Tibial artery (tissue), 4 donors: ENCODE measurements at regions of chr12 and their contacts with region 1.

Region 1: GRCh38 chr12:121536899-121537813 is 43.7 kb downstream of the KDM2B start:
- DNase-seq: peak; percentile 85 to 94
- H3K4me3 ChIP-seq: peak overlapping the region; percentile 62 to 88
- H3K27ac ChIP-seq: peak overlapping the region; percentile 75 to 81
- H3K4me1 ChIP-seq: peaks cover 0 to 28% (median 19%) of the 10 kb centered on the region in 4 donors
- H3K27me3 ChIP-seq: no peaks in the 10 kb centered on the region
- CTCF ChIP-seq: no peak

Region 2: DNA sequence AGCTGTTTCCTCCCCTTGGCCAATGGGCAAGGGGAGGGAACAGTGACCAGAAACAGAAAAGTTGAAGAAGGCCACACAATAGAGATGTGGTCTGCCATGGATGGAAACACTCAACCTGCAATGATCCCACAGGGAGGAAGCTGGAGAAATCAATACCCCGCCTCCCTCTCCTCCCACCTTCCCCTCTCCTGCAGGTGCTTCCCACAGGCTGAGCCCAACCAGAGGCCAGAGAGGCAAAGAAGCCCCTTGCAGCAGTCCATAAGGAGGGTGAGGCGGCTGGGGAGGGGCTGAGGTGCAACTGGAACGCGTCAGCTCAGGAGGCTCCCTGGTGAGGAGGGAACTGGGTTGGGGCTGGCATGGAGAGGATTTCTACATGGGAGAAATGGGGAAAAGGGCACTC is 53.2 kb before region 1 on chr12:
- intact Hi-C with region 1: no loop called
- DNase-seq: no peak
- H3K4me3 ChIP-seq: no peak overlapping the region
- H3K27ac ChIP-seq: no peak overlapping the region
- H3K4me1 ChIP-seq: no peaks in the 10 kb centered on the region
- H3K27me3 ChIP-seq: no peaks in the 10 kb centered on the region
- CTCF ChIP-seq: no peak

Region 3: GRCh38 chr12:121499929-121500793 is 37.0 kb before region 1 on chr12:
- intact Hi-C with region 1: loop called (anchors 5 kb)
- DNase-seq: peak; percentile 75 to 85
- H3K4me3 ChIP-seq: peak overlapping the region; percentile 37 to 50
- H3K27ac ChIP-seq: peak overlapping the region; percentile 71 to 80
- H3K4me1 ChIP-seq: peaks cover 0 to 10% (median 0%) of the 10 kb centered on the region in 4 donors
- H3K27me3 ChIP-seq: no peaks in the 10 kb centered on the region
- CTCF ChIP-seq: peak; percentile 83 to 98

Region 4: GRCh38 chr12:121579981-121580868 is 43.1 kb after region 1 on chr12:
- intact Hi-C with region 1: loop called (anchors 5 kb)
- DNase-seq: peak; percentile 76 to 86
- H3K4me3 ChIP-seq: peak overlapping the region; percentile 72 to 76
- H3K27ac ChIP-seq: peak overlapping the region; percentile 74 to 86
- H3K4me1 ChIP-seq: peaks cover 8 to 52% (median 38%) of the 10 kb centered on the region in 4 donors
- H3K27me3 ChIP-seq: no peaks in the 10 kb centered on the region
- CTCF ChIP-seq: no peak

Region 5: GRCh38 chr12:121590476-121591143 is 53.5 kb after region 1 on chr12:
- intact Hi-C with region 1: no loop called
- DNase-seq: no peak
- H3K4me3 ChIP-seq: peak overlapping the region in 1 of 2 donors; percentile 49
- H3K27ac ChIP-seq: peak overlapping the region in 1 of 2 donors; percentile 61
- H3K4me1 ChIP-seq: no peaks in the 10 kb centered on the region
- H3K27me3 ChIP-seq: no peaks in the 10 kb centered on the region
- CTCF ChIP-seq: no peak